Heart left ventricle (tissue), 16 donors: ENCODE measurements at regions of chr3 and their contacts with region 1.

Region 1: GRCh38 chr3:119279101-119279554 is 15.1 kb upstream of the ARHGAP31 start:
- DNase-seq: peak; percentile 59 to 84 (median 82)
- ATAC-seq: peak; percentile 88 to 94 (median 90)
- H3K4me3 ChIP-seq: peak overlapping the region in 4 of 12 donors; percentile 7 to 21 (median 17)
- H3K27ac ChIP-seq: peak overlapping the region; percentile 59 to 91 (median 82)
- H3K4me1 ChIP-seq: peaks cover 0 to 49% (median 20%) of the 10 kb centered on the region in 12 donors
- H3K27me3 ChIP-seq: no peaks in the 10 kb centered on the region
- CTCF ChIP-seq: no peak
- POLR2A ChIP-seq: no peak

Region 2: GRCh38 chr3:119322835-119323722 is 44.0 kb after region 1 on chr3:
- intact Hi-C with region 1: loop called in 4 of 10 experiments (anchors 5 to 10 kb)
- DNase-seq: peak; percentile 90 to 96 (median 93)
- ATAC-seq: peak; percentile 84 to 95 (median 93)
- H3K4me3 ChIP-seq: peak overlapping the region; percentile 8 to 76 (median 64)
- H3K27ac ChIP-seq: peak overlapping the region; percentile 80 to 98 (median 92)
- H3K4me1 ChIP-seq: peaks cover 0 to 73% (median 43%) of the 10 kb centered on the region in 12 donors
- H3K27me3 ChIP-seq: no peaks in the 10 kb centered on the region
- CTCF ChIP-seq: peak in 8 of 12 donors; percentile 9 to 44 (median 25)
- POLR2A ChIP-seq: peak in 1 of 2 donors; percentile 39

Region 3: DNA sequence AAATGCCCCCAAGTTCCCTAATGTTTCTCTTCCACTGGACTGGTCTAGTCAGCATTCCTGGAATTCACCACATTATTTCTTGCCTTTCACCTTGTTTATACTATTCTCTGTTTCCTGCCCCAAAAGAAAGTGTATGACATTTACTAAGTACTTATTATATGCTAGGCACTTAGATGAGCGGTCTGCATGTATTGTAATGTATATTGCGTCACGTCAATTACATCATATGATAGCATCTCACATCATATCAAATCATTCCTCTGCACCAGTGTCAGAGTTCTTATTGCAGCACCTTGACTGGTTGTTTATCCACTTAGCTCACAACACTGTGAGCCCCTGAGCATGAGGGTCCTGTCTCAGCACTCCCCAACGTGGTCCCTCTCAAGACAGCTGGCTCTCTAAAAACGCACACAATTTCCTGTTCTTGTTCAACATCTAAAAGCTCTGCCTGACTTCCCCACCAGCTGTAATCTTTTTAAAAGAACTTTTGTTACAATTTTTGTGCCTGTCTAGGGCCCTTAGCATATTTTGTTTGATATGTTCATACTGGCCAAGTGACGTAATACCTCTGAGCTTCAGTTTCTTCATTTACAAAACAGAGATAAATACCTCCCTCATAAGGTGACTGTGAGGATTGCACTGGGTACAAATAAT is 73.8 kb after region 1 on chr3:
- intact Hi-C with region 1: loop called in 7 of 10 experiments (anchors 1 to 5 kb)
- DNase-seq: no peak
- ATAC-seq: peak; percentile 39 to 69 (median 57)
- H3K4me3 ChIP-seq: no peak overlapping the region
- H3K27ac ChIP-seq: peak overlapping the region in 11 of 12 donors; percentile 6 to 76 (median 34)
- H3K4me1 ChIP-seq: peaks cover 11 to 75% (median 60%) of the 10 kb centered on the region in 12 donors
- H3K27me3 ChIP-seq: no peaks in the 10 kb centered on the region
- CTCF ChIP-seq: peak in 11 of 12 donors; percentile 12 to 62 (median 39)
- POLR2A ChIP-seq: no peak

Region 4: DNA sequence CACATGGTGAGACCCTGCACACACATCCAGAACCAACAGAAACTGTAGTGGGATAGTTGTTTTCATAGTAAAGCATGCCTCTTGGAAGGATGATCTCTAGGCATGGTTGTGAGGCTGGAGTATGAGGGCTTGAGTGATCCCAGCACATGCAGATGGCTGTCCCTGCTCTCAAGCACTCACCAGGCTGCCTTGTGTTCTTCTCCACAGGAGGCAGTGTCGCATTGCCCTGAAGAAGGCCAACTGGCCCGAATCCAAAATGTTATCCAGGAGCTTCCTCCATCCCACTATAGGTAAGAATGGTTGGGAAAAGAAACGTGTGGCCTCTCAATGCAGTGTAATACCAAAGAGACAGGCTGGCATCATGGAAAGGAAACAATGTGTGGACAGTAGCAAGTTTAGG is 101.6 kb after region 1 on chr3:
- intact Hi-C with region 1: loop called in 1 of 10 experiments (anchors 10 kb)
- DNase-seq: no peak
- ATAC-seq: peak in 3 of 4 donors; percentile 18 to 44 (median 25)
- H3K4me3 ChIP-seq: no peak overlapping the region
- H3K27ac ChIP-seq: no peak overlapping the region
- H3K4me1 ChIP-seq: peaks cover 0 to 8% (median 0%) of the 10 kb centered on the region in 12 donors
- H3K27me3 ChIP-seq: no peaks in the 10 kb centered on the region
- CTCF ChIP-seq: peak in 3 of 12 donors; percentile 14 to 18 (median 15)
- POLR2A ChIP-seq: no peak

Region 5: GRCh38 chr3:119469381-119470189 is 190.5 kb after region 1 on chr3:
- intact Hi-C with region 1: loop called in 5 of 10 experiments (anchors 2 to 10 kb)
- DNase-seq: peak in 1 of 5 donors; percentile 49
- ATAC-seq: peak in 1 of 4 donors; percentile 13
- H3K4me3 ChIP-seq: peak overlapping the region; percentile 53 to 96 (median 84)
- H3K27ac ChIP-seq: peak overlapping the region in 11 of 12 donors; percentile 66 to 97 (median 84)
- H3K4me1 ChIP-seq: peaks cover 0 to 19% (median 10%) of the 10 kb centered on the region in 12 donors
- H3K27me3 ChIP-seq: no peaks in the 10 kb centered on the region
- CTCF ChIP-seq: no peak
- POLR2A ChIP-seq: no peak